ENCODE measurements at regions of chr9 and their contacts with region 1.

Region 1: GRCh38 chr9:128786681-128787601 is at the start of gene TBC1D13:
- DNase-seq: peak; percentile 94
- H3K4me3 Mint-ChIP-seq: peak within 1 kb of the TSS; percentile 80
- H3K27ac Mint-ChIP-seq: peak within 1 kb of the TSS; percentile 57
- H3K4me1 Mint-ChIP-seq: peaks cover 13% of the 10 kb centered on the region
- H3K27me3 Mint-ChIP-seq: no peaks in the 10 kb centered on the region
- total RNA-seq, gene TBC1D13: 14.6 to 14.9 TPM

Region 2: DNA sequence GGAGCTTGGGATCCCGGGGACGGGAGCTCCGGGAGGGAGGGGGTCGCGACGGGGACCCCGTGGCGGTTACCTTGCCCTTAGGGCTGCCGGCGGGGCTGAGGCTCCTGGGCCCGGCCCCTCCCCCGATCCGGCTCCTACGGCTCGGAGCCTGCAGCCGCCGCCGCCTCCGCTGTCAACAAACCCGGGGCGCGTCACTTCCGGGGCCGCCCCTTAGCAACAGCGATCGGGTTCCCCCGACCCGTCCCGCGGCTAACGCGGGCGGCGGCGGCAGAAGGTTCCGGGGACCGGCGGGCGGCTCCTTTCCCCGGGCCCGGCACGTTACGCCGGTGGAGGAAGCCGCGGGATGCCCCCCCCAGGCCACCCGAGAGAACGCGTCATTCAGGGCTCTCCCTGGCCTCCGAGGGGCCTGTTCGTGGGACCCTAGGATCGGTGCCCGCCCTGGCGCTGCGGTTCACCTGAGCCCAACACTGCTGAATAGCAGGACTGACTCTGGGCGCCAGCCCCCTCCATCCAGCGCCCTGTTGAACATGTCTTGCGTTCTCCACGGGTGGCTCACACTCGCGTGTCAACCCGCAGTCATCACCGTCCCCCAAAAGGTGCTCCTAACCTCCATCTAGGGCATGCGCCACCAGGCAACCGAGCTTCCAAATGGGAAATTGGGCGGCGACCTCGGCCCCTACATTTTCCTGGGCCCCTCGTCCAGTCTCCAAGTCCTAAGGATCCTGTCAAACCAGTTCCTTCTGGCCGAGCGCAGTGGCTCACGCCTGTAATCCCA is 15.0 kb before region 1 on chr9 and contains the start of gene ZER1:
- CTCF ChIA-PET with region 1: interaction called, 3 read pairs
- POLR2A ChIA-PET with region 1: interaction called, 7 read pairs
- intact Hi-C with region 1: loop called (anchors 1 kb)
- DNase-seq: peak; percentile 95
- H3K4me3 Mint-ChIP-seq: peak within 1 kb of the TSS; percentile 94
- H3K27ac Mint-ChIP-seq: peak within 1 kb of the TSS; percentile 82
- H3K4me1 Mint-ChIP-seq: peaks cover 17% of the 10 kb centered on the region
- H3K27me3 Mint-ChIP-seq: no peaks in the 10 kb centered on the region
- total RNA-seq, gene ZER1: 16.2 to 18.0 TPM

Region 3: DNA sequence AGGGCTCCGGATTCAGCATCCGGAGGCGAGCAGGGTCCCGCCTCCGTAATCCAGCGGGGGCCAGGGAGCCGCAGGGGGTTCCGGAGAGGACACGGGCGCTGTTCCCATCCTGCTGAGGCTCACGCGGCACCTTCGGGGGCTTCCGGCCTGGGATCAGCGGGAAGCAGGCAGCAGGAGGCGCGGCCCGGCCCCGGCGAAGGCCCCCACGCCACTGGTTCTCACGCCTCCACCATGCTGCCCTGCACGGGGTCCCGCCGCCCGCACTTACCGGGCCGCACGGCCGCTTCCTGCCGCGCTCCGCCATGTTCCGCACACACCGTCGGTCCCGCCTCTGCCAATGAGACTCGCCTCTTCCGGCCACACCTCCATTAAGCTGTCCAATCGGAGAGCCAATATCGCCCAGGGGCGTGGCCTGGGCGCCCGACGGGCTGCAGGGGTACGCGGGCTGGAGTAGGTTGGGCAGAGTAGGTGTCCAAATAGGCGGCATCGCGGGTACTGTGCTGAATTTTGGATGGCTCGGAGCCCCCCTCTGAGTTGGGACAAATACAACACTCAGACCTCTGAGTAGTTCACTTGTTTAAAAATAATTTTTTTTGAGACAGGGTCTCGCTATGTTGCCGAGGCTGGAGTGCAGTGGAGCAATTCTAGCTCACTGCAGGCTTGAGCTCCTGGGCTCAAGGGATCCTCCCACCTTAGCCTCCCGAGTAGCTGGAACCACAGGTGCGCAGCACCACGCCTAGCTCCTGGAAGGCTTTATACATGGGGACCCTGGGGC is 42.7 kb after region 1 on chr9 and contains the start of gene SPOUT1:
- CTCF ChIA-PET with region 1: no interaction called
- POLR2A ChIA-PET with region 1: interaction called, 3 read pairs
- intact Hi-C with region 1: loop called (anchors 5 kb)
- DNase-seq: peak; percentile 97
- H3K4me3 Mint-ChIP-seq: peak within 1 kb of the TSS; percentile 91
- H3K27ac Mint-ChIP-seq: peak within 1 kb of the TSS; percentile 86
- H3K4me1 Mint-ChIP-seq: peaks cover 23% of the 10 kb centered on the region
- H3K27me3 Mint-ChIP-seq: no peaks in the 10 kb centered on the region
- total RNA-seq, gene SPOUT1: 89.2 to 94.2 TPM

Measured in activated CD4-positive, alpha-beta memory T cell treated with anti-CD3 and anti-CD28 coated beads for 36 hours (primary cell).